CD8-positive, alpha-beta memory T cell (primary cell): ENCODE measurements at regions of chr17 and their contacts with region 1.

Region 1: GRCh38 chr17:77444984-77445759 is 304.4 kb downstream of the SEC14L1 start:
- DNase-seq: peak; percentile 72 to 96 (median 94)
- H3K4me3 ChIP-seq: peak overlapping the region; percentile 66
- H3K4me3 Mint-ChIP-seq: peak overlapping the region; percentile 68 to 84 (median 81)
- H3K27ac ChIP-seq: peak overlapping the region; percentile 71
- H3K27ac Mint-ChIP-seq: peak overlapping the region; percentile 87 to 100 (median 98)
- H3K4me1 ChIP-seq: peaks cover 100% of the 10 kb centered on the region
- H3K4me1 Mint-ChIP-seq: peaks cover 89 to 97% (median 97%) of the 10 kb centered on the region in 3 donors
- H3K27me3 ChIP-seq: no peaks in the 10 kb centered on the region
- H3K27me3 Mint-ChIP-seq: peaks cover 0 to 5% of the 10 kb centered on the region in 2 donors

Region 2: GRCh38 chr17:77214743-77215142 is 230.4 kb before region 1 on chr17:
- CTCF ChIA-PET with region 1: no interaction called
- POLR2A ChIA-PET with region 1: no interaction called
- DNase-seq: peak in 1 of 5 donors; percentile 49
- H3K4me3 ChIP-seq: no peak overlapping the region
- H3K4me3 Mint-ChIP-seq: no peak overlapping the region
- H3K27ac ChIP-seq: no peak overlapping the region
- H3K27ac Mint-ChIP-seq: peak overlapping the region in 1 of 8 donors; percentile 77
- H3K4me1 ChIP-seq: no peaks in the 10 kb centered on the region
- H3K4me1 Mint-ChIP-seq: no peaks in the 10 kb centered on the region
- H3K27me3 ChIP-seq: no peaks in the 10 kb centered on the region
- H3K27me3 Mint-ChIP-seq: no peaks in the 10 kb centered on the region

Region 3: DNA sequence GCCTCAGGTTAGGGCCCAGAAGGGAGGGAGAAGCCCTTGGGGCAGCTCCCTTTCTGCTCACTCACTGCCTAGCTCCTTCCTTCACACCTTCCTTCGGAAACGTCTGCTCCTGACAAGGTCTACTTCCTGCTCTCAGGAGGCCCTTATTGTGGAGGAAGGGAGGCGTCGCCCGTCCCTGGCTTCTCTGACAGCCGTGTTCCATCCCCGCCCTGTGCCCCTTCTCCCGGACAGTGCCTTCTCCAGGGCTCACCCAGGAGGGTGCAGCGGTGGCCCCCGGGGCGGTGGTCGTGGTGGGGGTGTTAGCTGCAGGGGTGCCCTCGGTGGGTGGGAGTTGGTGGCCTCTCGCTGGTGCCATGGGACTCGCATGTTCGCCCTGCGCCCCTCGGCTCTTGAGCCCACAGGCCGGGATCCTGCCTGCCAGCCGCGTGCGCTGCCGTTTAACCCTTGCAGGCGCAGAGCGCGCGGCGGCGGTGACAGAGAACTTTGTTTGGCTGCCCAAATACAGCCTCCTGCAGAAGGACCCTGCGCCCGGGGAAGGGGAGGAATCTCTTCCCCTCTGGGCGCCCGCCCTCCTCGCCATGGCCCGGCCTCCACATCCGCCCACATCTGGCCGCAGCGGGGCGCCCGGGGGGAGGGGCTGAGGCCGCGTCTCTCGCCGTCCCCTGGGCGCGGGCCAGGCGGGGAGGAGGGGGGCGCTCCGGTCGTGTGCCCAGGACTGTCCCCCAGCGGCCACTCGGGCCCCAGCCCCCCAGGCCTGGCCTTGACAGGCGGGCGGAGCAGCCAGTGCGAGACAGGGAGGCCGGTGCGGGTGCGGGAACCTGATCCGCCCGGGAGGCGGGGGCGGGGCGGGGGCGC is 72.5 kb before region 1 on chr17:
- CTCF ChIA-PET with region 1: interaction called, 10 read pairs
- POLR2A ChIA-PET with region 1: interaction called, 13 read pairs
- DNase-seq: peak; percentile 55 to 76 (median 65)
- H3K4me3 ChIP-seq: peak overlapping the region; percentile 77
- H3K4me3 Mint-ChIP-seq: peak overlapping the region; percentile 80 to 93 (median 82)
- H3K27ac ChIP-seq: peak overlapping the region; percentile 82
- H3K27ac Mint-ChIP-seq: peak overlapping the region; percentile 79 to 95 (median 88)
- H3K4me1 ChIP-seq: peaks cover 70% of the 10 kb centered on the region
- H3K4me1 Mint-ChIP-seq: peaks cover 56 to 71% (median 67%) of the 10 kb centered on the region in 3 donors
- H3K27me3 ChIP-seq: no peaks in the 10 kb centered on the region
- H3K27me3 Mint-ChIP-seq: no peaks in the 10 kb centered on the region

Region 4: DNA sequence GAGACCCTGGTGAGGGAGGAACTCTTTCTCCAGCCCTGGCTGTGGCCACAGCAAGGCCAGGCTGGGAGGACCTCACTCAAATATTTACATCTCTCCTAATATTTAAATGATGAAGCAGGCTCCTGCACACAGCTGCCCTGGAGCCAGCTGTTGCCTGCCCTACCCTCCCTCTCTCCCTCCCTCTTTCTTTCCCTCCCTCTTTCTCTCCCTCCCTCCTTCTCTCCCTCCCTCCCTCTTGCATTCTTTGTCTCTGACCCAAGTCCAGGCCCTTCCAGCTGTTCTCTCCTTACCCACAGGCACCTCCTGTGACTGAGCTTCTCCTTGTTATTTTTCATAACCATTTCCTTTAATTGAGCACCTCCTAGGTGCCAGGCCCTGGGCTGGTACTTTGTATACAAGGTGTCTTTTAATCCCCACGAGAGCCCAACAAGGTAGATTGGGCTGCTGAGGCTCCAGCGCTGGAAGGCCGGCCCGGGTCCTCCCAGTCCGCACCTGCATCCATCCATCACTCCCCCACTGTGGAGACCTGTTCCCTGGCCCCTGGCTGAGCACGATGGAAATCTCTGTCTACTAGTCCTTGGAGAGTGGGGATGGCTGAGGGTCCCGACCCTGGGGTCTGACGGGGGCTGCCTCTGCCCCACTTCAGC is 62.1 kb before region 1 on chr17:
- CTCF ChIA-PET with region 1: interaction called, 11 read pairs
- POLR2A ChIA-PET with region 1: interaction called, 6 read pairs
- DNase-seq: no peak
- H3K4me3 ChIP-seq: peak overlapping the region; percentile 62
- H3K4me3 Mint-ChIP-seq: peak overlapping the region; percentile 32 to 91 (median 78)
- H3K27ac ChIP-seq: no peak overlapping the region
- H3K27ac Mint-ChIP-seq: peak overlapping the region; percentile 87 to 96 (median 91)
- H3K4me1 ChIP-seq: peaks cover 94% of the 10 kb centered on the region
- H3K4me1 Mint-ChIP-seq: peaks cover 81 to 95% (median 88%) of the 10 kb centered on the region in 3 donors
- H3K27me3 ChIP-seq: no peaks in the 10 kb centered on the region
- H3K27me3 Mint-ChIP-seq: no peaks in the 10 kb centered on the region

Region 5: DNA sequence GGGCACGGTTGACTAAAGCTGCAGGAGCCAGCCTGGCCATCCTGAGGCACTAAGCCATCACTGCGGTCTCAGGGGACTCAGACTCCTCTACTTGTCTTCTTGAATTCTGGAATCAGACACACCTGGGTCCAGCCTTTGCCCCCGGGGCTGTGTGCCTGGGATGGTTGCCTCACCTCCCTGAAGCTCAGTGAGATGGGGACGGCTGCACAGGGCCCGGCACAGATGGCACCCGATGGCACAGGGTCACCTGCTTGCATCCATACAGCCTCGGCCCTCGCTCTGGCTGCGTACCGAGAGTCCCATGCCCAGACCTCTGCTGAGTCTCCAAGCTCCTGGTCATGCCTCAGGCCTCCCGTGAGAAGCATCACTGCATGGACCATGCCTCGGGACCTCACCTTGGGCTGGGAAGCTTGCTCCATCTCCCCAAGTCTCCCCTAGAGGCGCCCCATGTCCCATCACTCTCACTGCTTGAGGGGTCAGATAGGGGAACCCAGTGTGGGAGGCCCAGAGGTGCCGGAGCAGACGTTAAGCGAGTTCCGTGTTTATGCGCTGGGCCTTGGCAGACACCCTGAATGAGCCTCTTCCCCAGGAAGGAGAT is 11.9 kb after region 1 on chr17:
- CTCF ChIA-PET with region 1: interaction called, 24 read pairs
- POLR2A ChIA-PET with region 1: interaction called, 100 read pairs
- DNase-seq: peak in 1 of 5 donors; percentile 53
- H3K4me3 ChIP-seq: peak overlapping the region; percentile 95
- H3K4me3 Mint-ChIP-seq: peak overlapping the region; percentile 89 to 99 (median 98)
- H3K27ac ChIP-seq: peak overlapping the region; percentile 67
- H3K27ac Mint-ChIP-seq: peak overlapping the region; percentile 87 to 100 (median 98)
- H3K4me1 ChIP-seq: peaks cover 68% of the 10 kb centered on the region
- H3K4me1 Mint-ChIP-seq: peaks cover 71 to 77% (median 71%) of the 10 kb centered on the region in 3 donors
- H3K27me3 ChIP-seq: no peaks in the 10 kb centered on the region
- H3K27me3 Mint-ChIP-seq: peaks cover 0 to 2% of the 10 kb centered on the region in 2 donors

Region 6: DNA sequence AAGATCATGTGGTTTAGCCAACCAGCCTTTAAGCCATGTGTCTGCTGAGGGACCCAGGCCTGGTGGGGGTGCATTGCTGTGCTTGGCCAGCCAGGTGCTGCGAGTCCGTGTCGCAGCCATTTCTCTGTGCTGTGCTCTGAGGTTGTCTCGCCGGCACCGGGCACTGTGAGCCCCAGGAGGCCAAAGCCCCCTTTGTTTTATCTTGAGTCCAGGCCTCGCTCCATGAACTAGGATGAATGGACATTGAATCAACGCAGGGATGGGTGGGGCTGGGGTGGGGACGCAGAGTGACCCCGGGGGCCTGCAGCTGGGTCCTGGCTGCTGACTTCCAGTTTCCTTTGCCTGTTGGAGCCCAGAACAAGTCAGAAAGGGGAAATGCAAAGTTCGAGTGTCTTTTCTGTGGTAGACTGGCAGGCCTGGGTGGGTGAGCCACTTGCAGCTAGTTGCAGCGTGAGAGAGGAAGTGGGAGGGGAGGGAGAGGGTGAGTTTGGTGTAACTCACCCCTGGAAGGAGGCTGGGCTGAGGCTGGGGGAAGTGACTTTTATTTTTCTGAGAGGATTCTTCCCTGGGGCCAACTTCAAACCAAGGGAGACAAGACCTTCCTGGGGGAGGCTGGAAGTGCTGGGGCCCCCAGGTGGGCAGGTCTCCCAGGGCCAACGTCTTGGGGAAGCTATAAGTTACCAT is 20.3 kb after region 1 on chr17:
- CTCF ChIA-PET with region 1: interaction called, 17 read pairs
- POLR2A ChIA-PET with region 1: interaction called, 33 read pairs
- DNase-seq: peak; percentile 56 to 88 (median 81)
- H3K4me3 ChIP-seq: peak overlapping the region; percentile 59
- H3K4me3 Mint-ChIP-seq: peak overlapping the region; percentile 41 to 90 (median 84)
- H3K27ac ChIP-seq: peak overlapping the region; percentile 27
- H3K27ac Mint-ChIP-seq: peak overlapping the region; percentile 81 to 98 (median 93)
- H3K4me1 ChIP-seq: peaks cover 93% of the 10 kb centered on the region
- H3K4me1 Mint-ChIP-seq: peaks cover 78 to 97% (median 88%) of the 10 kb centered on the region in 3 donors
- H3K27me3 ChIP-seq: no peaks in the 10 kb centered on the region
- H3K27me3 Mint-ChIP-seq: peaks cover 0 to 6% of the 10 kb centered on the region in 2 donors

Region 7: DNA sequence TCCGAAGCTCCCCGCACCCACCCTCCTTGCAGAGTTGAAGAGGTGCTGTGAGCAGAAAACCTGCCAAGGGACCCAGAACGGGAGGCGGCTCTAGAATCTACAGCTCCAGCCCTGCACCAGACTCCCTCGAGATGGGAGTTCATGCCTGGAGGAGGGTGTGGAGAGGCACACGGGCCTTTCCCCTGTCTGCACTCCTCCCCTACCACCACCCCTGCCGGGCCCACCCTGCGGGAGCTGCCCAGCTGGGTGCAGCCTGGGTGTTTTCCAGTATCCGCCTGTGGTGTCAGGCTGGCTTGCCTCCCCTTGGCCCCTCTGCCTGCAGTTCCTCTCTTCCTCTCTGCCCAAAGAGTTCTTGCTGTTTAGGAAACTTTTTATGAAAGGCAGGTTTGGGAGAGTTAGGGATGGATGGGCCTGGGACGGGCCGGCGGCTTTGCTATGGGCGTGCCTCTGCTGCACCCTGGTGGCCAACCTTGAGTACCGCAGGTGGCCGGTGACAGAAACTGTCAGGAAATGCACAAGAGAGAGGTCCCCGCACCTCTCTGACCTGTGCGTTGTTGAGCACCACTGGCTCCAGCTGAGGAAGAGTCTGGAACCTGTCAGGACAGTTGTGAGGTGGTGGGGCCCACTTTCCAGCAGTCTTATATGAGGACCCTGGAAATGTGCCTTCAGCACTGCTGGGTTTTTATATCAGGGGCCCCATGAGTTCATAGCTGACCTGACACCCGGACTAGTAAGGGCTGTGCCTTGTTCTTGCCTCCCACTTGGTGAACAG is 49.7 kb after region 1 on chr17:
- CTCF ChIA-PET with region 1: interaction called, 15 read pairs
- POLR2A ChIA-PET with region 1: interaction called, 6 read pairs
- DNase-seq: peak; percentile 64 to 81 (median 72)
- H3K4me3 ChIP-seq: no peak overlapping the region
- H3K4me3 Mint-ChIP-seq: peak overlapping the region in 1 of 7 donors; percentile 12
- H3K27ac ChIP-seq: no peak overlapping the region
- H3K27ac Mint-ChIP-seq: peak overlapping the region; percentile 75 to 96 (median 86)
- H3K4me1 ChIP-seq: peaks cover 17% of the 10 kb centered on the region
- H3K4me1 Mint-ChIP-seq: peaks cover 19 to 40% (median 24%) of the 10 kb centered on the region in 3 donors
- H3K27me3 ChIP-seq: no peaks in the 10 kb centered on the region
- H3K27me3 Mint-ChIP-seq: no peaks in the 10 kb centered on the region